Gastrocnemius medialis (tissue), 4 donors: ENCODE measurements at regions of chr9 and their contacts with region 1.

Region 1: GRCh38 chr9:114413861-114414301 is 26.1 kb upstream of the AKNA start:
- DNase-seq: no peak
- ATAC-seq: peak in 1 of 2 donors; percentile 26
- H3K4me3 ChIP-seq: no peak overlapping the region
- H3K27ac ChIP-seq: no peak overlapping the region
- H3K4me1 ChIP-seq: no peaks in the 10 kb centered on the region
- H3K27me3 ChIP-seq: no peaks in the 10 kb centered on the region
- CTCF ChIP-seq: no peak
- POLR2A ChIP-seq: no peak

Region 2: GRCh38 chr9:114177423-114178064 is 236.3 kb before region 1 on chr9:
- in situ Hi-C with region 1: no loop called
- intact Hi-C with region 1: no loop called
- DNase-seq: no peak
- ATAC-seq: peak in 1 of 2 donors; percentile 40
- H3K4me3 ChIP-seq: no peak overlapping the region
- H3K27ac ChIP-seq: peak overlapping the region; percentile 69 to 79 (median 74)
- H3K4me1 ChIP-seq: peaks cover 62 to 74% of the 10 kb centered on the region in 2 donors
- H3K27me3 ChIP-seq: no peaks in the 10 kb centered on the region
- CTCF ChIP-seq: no peak
- POLR2A ChIP-seq: no peak

Region 3: DNA sequence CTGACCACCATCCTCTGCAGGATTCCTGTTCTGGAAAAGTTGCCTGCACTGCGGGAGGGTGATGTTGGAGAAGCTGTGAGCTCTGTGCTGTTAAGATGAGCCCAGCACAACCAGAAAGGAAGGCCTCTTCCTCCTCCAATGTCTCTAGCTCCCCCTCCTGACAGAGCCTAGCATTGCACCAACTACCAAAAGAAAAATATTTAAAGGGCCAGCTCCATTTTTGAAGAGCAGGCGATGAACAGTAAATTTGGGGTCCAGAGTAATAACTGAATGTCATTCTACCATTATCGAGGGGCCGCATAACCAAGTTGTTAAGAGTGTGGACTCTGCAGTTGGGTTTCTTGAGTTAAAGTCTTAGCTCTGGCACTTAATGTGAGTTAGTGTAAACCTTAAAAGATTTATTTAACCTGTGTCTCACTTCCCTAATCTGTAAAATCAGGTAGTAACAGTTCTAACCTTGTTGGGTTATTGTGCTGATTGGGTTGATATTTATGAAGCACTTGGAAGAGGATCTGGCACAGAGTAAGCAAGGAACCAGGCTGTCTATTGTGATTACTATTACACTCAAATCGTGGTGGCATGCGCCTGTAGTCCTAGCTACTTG is 239.8 kb after region 1 on chr9:
- in situ Hi-C with region 1: loop called (anchors 5 to 10 kb)
- intact Hi-C with region 1: no loop called
- DNase-seq: peak; percentile 9 to 43
- ATAC-seq: peak; percentile 16 to 66
- H3K4me3 ChIP-seq: no peak overlapping the region
- H3K27ac ChIP-seq: no peak overlapping the region
- H3K4me1 ChIP-seq: no peaks in the 10 kb centered on the region
- H3K27me3 ChIP-seq: no peaks in the 10 kb centered on the region
- CTCF ChIP-seq: peak; percentile 59 to 81 (median 76)
- POLR2A ChIP-seq: no peak